Lower lobe of right lung (tissue), 2 donors: ENCODE measurements at regions of chr4 and their contacts with region 1.

Region 1: GRCh38 chr4:109998867-109999584 is 86.3 kb downstream of the EGF start:
- DNase-seq: no peak
- ATAC-seq: peak; percentile 41 to 71
- H3K4me3 ChIP-seq: no peak overlapping the region
- H3K27ac ChIP-seq: no peak overlapping the region
- H3K4me1 ChIP-seq: no peaks in the 10 kb centered on the region
- H3K27me3 ChIP-seq: peaks cover 4% of the 10 kb centered on the region
- CTCF ChIP-seq: peak; percentile 62

Region 2: DNA sequence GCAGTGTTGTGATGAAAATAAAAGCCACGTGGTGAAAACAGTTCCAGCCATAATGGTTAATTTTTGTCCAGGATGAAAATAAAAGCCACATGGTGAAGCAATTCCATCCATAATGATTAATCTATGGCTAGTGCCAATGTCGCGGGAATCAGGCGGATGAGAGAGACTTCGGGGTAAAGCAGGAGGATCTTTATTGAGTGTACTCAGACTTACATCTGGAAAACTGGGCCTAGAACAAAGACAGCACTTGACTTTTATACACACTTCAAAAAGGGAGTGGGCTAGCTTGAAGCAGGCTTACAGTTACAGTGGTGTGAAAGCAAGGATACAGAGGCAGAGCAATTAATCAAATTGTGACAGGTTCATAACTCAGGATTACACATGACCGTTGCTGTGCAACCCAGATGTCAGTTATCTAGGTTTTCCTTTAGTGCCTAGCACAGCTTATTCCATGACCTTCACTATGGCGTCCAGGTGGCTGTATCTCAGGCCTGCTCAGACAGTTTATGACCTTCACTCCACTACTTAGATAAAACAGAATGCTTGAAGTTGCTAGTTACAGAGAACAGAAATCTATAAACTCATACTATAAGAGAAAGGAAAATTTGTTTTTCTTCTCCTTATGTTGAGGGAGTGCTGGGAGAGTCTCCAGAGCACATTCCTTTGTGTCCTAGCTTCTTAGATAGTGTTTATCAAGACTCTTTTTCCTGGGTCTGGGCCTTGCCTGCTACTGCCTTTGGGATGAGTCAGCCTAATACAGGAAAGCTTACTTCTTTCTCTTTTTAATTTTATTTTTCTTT is 263.3 kb before region 1 on chr4:
- intact Hi-C with region 1: no loop called
- DNase-seq: no peak
- ATAC-seq: no peak
- H3K4me3 ChIP-seq: no peak overlapping the region
- H3K27ac ChIP-seq: no peak overlapping the region
- H3K4me1 ChIP-seq: no peaks in the 10 kb centered on the region
- H3K27me3 ChIP-seq: no peaks in the 10 kb centered on the region
- CTCF ChIP-seq: no peak

Region 3: GRCh38 chr4:110071466-110071865 is 72.4 kb after region 1 on chr4:
- intact Hi-C with region 1: no loop called
- DNase-seq: peak; percentile 50
- ATAC-seq: peak; percentile 55 to 66
- H3K4me3 ChIP-seq: no peak overlapping the region
- H3K27ac ChIP-seq: no peak overlapping the region
- H3K4me1 ChIP-seq: no peaks in the 10 kb centered on the region
- H3K27me3 ChIP-seq: no peaks in the 10 kb centered on the region
- CTCF ChIP-seq: no peak

Region 4: GRCh38 chr4:110344162-110344561 is 345.1 kb after region 1 on chr4:
- intact Hi-C with region 1: no loop called
- DNase-seq: no peak
- ATAC-seq: no peak
- H3K4me3 ChIP-seq: no peak overlapping the region
- H3K27ac ChIP-seq: no peak overlapping the region
- H3K4me1 ChIP-seq: no peaks in the 10 kb centered on the region
- H3K27me3 ChIP-seq: no peaks in the 10 kb centered on the region
- CTCF ChIP-seq: peak; percentile 13

Region 5: GRCh38 chr4:110516106-110516922 is 517.3 kb after region 1 on chr4:
- intact Hi-C with region 1: loop called (anchors 5 kb)
- DNase-seq: peak; percentile 65
- ATAC-seq: peak; percentile 95 to 98
- H3K4me3 ChIP-seq: peak overlapping the region; percentile 51
- H3K27ac ChIP-seq: peak overlapping the region; percentile 42
- H3K4me1 ChIP-seq: peaks cover 10% of the 10 kb centered on the region
- H3K27me3 ChIP-seq: no peaks in the 10 kb centered on the region
- CTCF ChIP-seq: peak; percentile 69